Naive thymus-derived CD4-positive, alpha-beta T cell (primary cell): ENCODE measurements at regions of chr2 and their contacts with region 1.

Region 1: DNA sequence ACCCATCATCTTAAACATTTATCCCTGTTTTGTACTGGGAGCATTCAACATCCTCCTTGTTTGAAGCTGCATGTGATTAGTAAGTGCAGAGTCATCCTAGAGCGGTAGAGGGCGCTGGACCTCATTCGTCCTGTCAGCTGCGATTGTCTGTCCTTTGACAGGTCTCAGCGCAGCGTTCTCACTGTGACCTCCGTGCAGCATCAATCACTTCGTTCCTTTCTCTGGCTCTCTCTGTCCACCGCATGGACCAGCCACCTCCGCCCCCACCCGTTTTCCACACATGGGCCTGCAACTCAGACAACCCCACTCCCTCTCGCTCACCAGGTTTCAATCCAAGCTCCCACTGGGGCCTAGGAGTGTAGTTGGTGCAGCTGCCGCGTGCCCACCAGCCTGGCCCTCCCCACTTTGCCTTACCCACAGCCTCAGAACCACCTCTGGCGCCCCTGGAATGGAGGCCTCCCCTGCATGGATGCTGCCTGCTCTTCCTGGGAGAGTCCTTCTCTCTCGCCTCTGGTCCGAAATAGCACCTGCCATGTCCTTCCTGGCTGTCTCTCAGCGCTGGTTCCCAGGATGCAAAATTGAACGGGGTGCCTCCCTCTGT is 90.5 kb downstream of the NDUFA10 start:
- DNase-seq: peak; percentile 20 to 55 (median 43)
- ATAC-seq: peak; percentile 80
- H3K4me3 ChIP-seq: no peak overlapping the region
- H3K4me3 Mint-ChIP-seq: peak overlapping the region in 3 of 10 donors; percentile 29 to 76 (median 42)
- H3K27ac ChIP-seq: no peak overlapping the region
- H3K27ac Mint-ChIP-seq: peak overlapping the region in 1 of 9 donors; percentile 64
- H3K4me1 ChIP-seq: no peaks in the 10 kb centered on the region
- H3K4me1 Mint-ChIP-seq: peaks cover 5 to 9% (median 7%) of the 10 kb centered on the region in 7 donors
- H3K27me3 ChIP-seq: no peaks in the 10 kb centered on the region
- H3K27me3 Mint-ChIP-seq: peaks cover 0 to 12% (median 0%) of the 10 kb centered on the region in 5 donors

Region 2: GRCh38 chr2:239991689-239992314 is 57.1 kb after region 1 on chr2:
- CTCF ChIA-PET with region 1: interaction called, 4 read pairs
- POLR2A ChIA-PET with region 1: no interaction called
- intact Hi-C with region 1: loop called in 1 of 2 experiments (anchors 1 kb)
- DNase-seq: peak in 6 of 9 donors; percentile 12 to 54 (median 42)
- ATAC-seq: peak; percentile 86
- H3K4me3 ChIP-seq: no peak overlapping the region
- H3K4me3 Mint-ChIP-seq: no peak overlapping the region
- H3K27ac ChIP-seq: no peak overlapping the region
- H3K27ac Mint-ChIP-seq: no peak overlapping the region
- H3K4me1 ChIP-seq: no peaks in the 10 kb centered on the region
- H3K4me1 Mint-ChIP-seq: peaks cover 0 to 5% (median 0%) of the 10 kb centered on the region in 7 donors
- H3K27me3 ChIP-seq: no peaks in the 10 kb centered on the region
- H3K27me3 Mint-ChIP-seq: no peaks in the 10 kb centered on the region